ENCODE measurements at regions of chr6 and their contacts with region 1.

Region 1: GRCh38 chr6:145734486-145735355 is 599 bp downstream of the EPM2A start:
- DNase-seq: peak; percentile 75
- ATAC-seq: peak; percentile 90
- H3K4me3 ChIP-seq: peak overlapping the region; percentile 59 to 69
- H3K27ac ChIP-seq: peak overlapping the region; percentile 85
- H3K4me1 ChIP-seq: peaks cover 10 to 22% of the 10 kb centered on the region in 2 experiments
- H3K27me3 ChIP-seq: no peaks in the 10 kb centered on the region
- CTCF ChIP-seq: no peak
- POLR2A ChIP-seq: no peak
- RAD21 ChIP-seq: no peak

Region 2: GRCh38 chr6:145423922-145424321 is 310.8 kb before region 1 on chr6:
- CTCF ChIA-PET with region 1: no interaction called
- POLR2A ChIA-PET with region 1: no interaction called
- RAD21 ChIA-PET with region 1: no interaction called
- intact Hi-C with region 1: no loop called
- DNase-seq: no peak
- ATAC-seq: no peak
- H3K4me3 ChIP-seq: no peak overlapping the region
- H3K27ac ChIP-seq: no peak overlapping the region
- H3K4me1 ChIP-seq: no peaks in the 10 kb centered on the region
- H3K27me3 ChIP-seq: no peaks in the 10 kb centered on the region
- CTCF ChIP-seq: no peak
- POLR2A ChIP-seq: no peak
- RAD21 ChIP-seq: no peak

Region 3: DNA sequence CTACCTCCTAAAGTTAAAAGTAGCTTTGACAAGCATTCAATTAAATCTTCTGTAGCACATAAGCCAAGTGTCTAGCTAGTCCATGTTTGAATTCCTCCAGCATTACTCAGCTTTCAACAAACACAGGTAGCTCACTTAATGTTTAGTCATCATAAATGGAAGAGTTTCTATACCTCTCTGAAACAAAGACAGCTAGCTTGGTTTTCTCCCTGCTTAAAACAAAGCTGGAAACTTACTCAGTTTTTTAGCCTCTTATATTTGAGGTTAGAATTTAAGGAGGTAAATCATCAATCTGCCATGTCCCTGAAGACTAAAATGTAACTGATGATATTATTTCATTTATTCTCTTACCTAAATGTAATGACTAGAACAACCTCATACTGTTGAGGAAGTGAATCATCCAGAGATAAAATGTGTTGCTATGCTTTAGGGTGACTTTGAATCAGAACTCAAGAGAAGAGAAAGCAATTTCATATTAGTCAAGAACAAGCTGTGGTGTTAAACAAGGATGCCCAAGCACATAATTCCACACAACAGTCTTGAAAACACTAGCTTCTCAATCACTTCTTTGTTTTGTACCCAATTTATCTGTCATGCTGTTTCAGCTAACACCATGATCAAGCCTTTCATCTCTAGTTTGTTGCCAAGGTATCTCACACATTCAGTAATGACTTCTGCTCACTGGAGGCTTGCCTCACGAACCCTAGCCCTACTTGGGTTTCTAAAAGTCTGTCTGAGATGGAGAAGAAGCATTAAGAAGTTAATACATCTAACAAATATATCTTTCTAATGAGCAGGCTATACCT is 251.3 kb before region 1 on chr6:
- CTCF ChIA-PET with region 1: no interaction called
- POLR2A ChIA-PET with region 1: no interaction called
- RAD21 ChIA-PET with region 1: no interaction called
- intact Hi-C with region 1: no loop called
- DNase-seq: peak; percentile 80
- ATAC-seq: peak; percentile 92
- H3K4me3 ChIP-seq: peak overlapping the region in 1 of 2 experiments; percentile 25; a peak in 2 of 4 replicates
- H3K27ac ChIP-seq: peak overlapping the region; percentile 38; the same call in 1 of the 2 replicates
- H3K4me1 ChIP-seq: peaks cover 10 to 22% of the 10 kb centered on the region in 2 experiments; a peak in 3 of 4 replicates
- H3K27me3 ChIP-seq: no peaks in the 10 kb centered on the region
- CTCF ChIP-seq: no peak
- POLR2A ChIP-seq: no peak
- RAD21 ChIP-seq: no peak

Region 4: GRCh38 chr6:145813285-145814034 is 78.7 kb after region 1 on chr6:
- CTCF ChIA-PET with region 1: no interaction called
- POLR2A ChIA-PET with region 1: interaction called, 4 read pairs
- RAD21 ChIA-PET with region 1: no interaction called
- intact Hi-C with region 1: loop called (anchors 2 kb)
- DNase-seq: no peak
- ATAC-seq: no peak
- H3K4me3 ChIP-seq: peak overlapping the region; percentile 56 to 66
- H3K27ac ChIP-seq: peak overlapping the region; percentile 80
- H3K4me1 ChIP-seq: peaks cover 0 to 22% of the 10 kb centered on the region in 2 experiments; a peak in 2 of 4 replicates
- H3K27me3 ChIP-seq: no peaks in the 10 kb centered on the region
- CTCF ChIP-seq: no peak
- POLR2A ChIP-seq: no peak
- RAD21 ChIP-seq: no peak

Region 5: GRCh38 chr6:145850671-145851070 is 116.0 kb after region 1 on chr6:
- CTCF ChIA-PET with region 1: no interaction called
- POLR2A ChIA-PET with region 1: no interaction called
- RAD21 ChIA-PET with region 1: no interaction called
- intact Hi-C with region 1: no loop called
- DNase-seq: no peak
- ATAC-seq: no peak
- H3K4me3 ChIP-seq: no peak overlapping the region
- H3K27ac ChIP-seq: no peak overlapping the region
- H3K4me1 ChIP-seq: no peaks in the 10 kb centered on the region
- H3K27me3 ChIP-seq: no peaks in the 10 kb centered on the region
- CTCF ChIP-seq: no peak
- POLR2A ChIP-seq: no peak
- RAD21 ChIP-seq: no peak

Region 6: GRCh38 chr6:145963216-145964068 is 228.7 kb after region 1 on chr6:
- CTCF ChIA-PET with region 1: no interaction called
- POLR2A ChIA-PET with region 1: no interaction called
- RAD21 ChIA-PET with region 1: no interaction called
- intact Hi-C with region 1: loop called (anchors 10 kb)
- DNase-seq: peak; percentile 1
- ATAC-seq: peak; percentile 45
- H3K4me3 ChIP-seq: peak overlapping the region; percentile 61 to 79
- H3K27ac ChIP-seq: peak overlapping the region; percentile 17; the same call in 1 of the 2 replicates
- H3K4me1 ChIP-seq: peaks cover 0 to 18% of the 10 kb centered on the region in 2 experiments; a peak in 3 of 4 replicates
- H3K27me3 ChIP-seq: no peaks in the 10 kb centered on the region
- CTCF ChIP-seq: no peak
- POLR2A ChIP-seq: no peak
- RAD21 ChIP-seq: no peak

Measured in HCT116 (cell line).